HCT116 (cell line): ENCODE measurements at regions of chr7 and their contacts with region 1.

Region 1: GRCh38 chr7:99229234-99229633 is 21.3 kb upstream of the KPNA7 start:
- DNase-seq: no peak
- ATAC-seq: no peak
- H3K4me3 ChIP-seq: no peak overlapping the region
- H3K27ac ChIP-seq: no peak overlapping the region
- H3K4me1 ChIP-seq: peaks cover 16 to 36% of the 10 kb centered on the region in 2 experiments
- H3K27me3 ChIP-seq: no peaks in the 10 kb centered on the region
- CTCF ChIP-seq: no peak
- POLR2A ChIP-seq: no peak
- RAD21 ChIP-seq: no peak

Region 2: DNA sequence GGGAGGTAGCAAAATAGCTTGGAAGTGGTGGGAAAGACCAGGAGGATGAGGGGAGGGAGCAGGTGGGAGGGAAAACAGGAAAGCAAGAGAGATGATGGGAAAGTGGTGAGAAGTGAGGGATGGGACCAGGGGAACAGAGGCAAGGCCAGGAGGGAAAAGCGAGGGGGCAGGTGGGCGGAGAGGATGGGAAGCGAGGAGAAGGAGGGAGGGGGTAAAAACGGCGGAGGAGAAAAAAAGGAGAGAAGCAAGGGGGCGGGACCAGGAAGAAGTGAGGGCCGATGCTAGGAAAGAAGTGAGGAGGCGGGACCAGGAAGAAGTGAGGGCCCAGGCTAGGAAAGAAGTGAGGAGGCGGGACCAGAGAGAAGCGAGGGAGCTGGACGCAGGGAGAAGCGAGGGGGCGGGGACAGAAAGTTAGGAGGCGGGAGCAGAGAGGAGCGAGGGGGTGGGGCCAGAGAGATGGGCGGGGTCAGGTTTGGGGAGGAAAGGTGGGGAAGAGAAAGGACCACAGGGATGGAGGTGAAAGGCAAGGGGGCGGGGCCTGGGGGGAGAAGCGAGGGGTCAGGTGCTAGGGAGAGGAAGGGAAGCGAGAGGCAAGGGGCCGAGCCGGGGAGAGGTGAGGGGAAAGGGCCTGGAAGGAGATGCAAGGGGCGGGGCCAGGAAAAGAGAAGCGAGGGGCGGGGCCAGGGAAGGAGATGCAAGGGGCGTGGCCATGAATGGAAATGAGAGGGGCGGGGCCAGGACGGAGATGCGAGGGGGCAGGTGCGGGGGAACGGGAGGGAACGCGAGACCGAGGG is 86.3 kb before region 1 on chr7:
- CTCF ChIA-PET with region 1: no interaction called
- POLR2A ChIA-PET with region 1: no interaction called
- RAD21 ChIA-PET with region 1: no interaction called
- intact Hi-C with region 1: loop called (anchors 1 kb)
- DNase-seq: peak; percentile 78
- ATAC-seq: peak; percentile 76
- H3K4me3 ChIP-seq: peak overlapping the region; percentile 61 to 66
- H3K27ac ChIP-seq: peak overlapping the region; percentile 60
- H3K4me1 ChIP-seq: peaks cover 4 to 28% of the 10 kb centered on the region in 2 experiments; a peak in 3 of 4 replicates
- H3K27me3 ChIP-seq: no peaks in the 10 kb centered on the region
- CTCF ChIP-seq: no peak
- POLR2A ChIP-seq: no peak
- RAD21 ChIP-seq: no peak

Region 3: DNA sequence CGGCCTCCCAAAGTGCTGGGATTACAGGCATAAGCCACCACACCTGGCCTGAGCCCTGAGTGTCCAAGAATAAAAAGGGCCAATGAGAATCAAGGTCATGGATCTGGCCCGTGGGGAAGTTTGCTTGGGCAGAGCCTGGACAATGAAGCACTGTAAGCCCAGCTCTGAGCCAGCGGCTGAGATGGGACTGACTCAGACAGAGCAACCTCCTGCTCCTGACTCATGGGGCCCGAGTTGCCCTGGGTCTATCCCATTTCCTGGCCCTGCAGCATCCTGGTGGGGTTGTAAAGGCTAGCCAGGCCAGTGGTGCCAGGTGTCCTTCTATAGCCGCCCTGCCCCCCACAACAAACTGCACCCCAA is 38.2 kb after region 1 on chr7:
- CTCF ChIA-PET with region 1: no interaction called
- POLR2A ChIA-PET with region 1: no interaction called
- RAD21 ChIA-PET with region 1: no interaction called
- intact Hi-C with region 1: loop called (anchors 1 kb)
- DNase-seq: peak; percentile 85
- ATAC-seq: peak; percentile 97
- H3K4me3 ChIP-seq: peak overlapping the region in 1 of 2 experiments; percentile 7; a peak in 1 of 4 replicates
- H3K27ac ChIP-seq: no peak overlapping the region
- H3K4me1 ChIP-seq: peaks cover 13 to 39% of the 10 kb centered on the region in 2 experiments
- H3K27me3 ChIP-seq: no peaks in the 10 kb centered on the region
- CTCF ChIP-seq: no peak
- POLR2A ChIP-seq: no peak
- RAD21 ChIP-seq: no peak